ENCODE measurements at regions of chr2 and their contacts with region 1.

Region 1: DNA sequence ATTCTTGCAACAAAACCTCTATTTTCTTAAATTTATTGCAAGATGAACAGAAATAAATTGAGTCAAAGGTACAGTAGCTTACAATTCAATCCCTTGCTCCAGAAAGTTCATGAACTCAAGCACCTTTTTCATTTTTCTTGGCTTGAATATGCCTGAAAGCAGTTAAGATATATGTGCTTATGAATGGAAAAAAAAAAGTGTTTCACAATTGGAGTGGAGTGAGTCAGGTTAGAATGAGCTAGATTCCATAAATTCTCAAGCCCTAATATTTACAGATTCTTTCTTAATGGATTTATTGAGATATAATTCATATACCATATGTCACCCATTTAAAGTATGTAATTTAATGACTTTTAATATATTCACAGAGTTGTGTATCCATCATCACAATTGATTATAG is 39.6 kb upstream of the NEMP2 start:
- DNase-seq: no peak
- ATAC-seq: no peak
- H3K4me3 ChIP-seq: no peak overlapping the region
- H3K4me3 Mint-ChIP-seq: peak overlapping the region in 1 of 3 donors; percentile 61
- H3K27ac ChIP-seq: no peak overlapping the region
- H3K27ac Mint-ChIP-seq: no peak overlapping the region
- H3K4me1 ChIP-seq: peaks cover 14 to 30% of the 10 kb centered on the region in 2 experiments
- H3K4me1 Mint-ChIP-seq: peaks cover 26 to 48% (median 32%) of the 10 kb centered on the region in 3 donors
- H3K27me3 ChIP-seq: no peaks in the 10 kb centered on the region
- H3K27me3 Mint-ChIP-seq: no peaks in the 10 kb centered on the region

Region 2: DNA sequence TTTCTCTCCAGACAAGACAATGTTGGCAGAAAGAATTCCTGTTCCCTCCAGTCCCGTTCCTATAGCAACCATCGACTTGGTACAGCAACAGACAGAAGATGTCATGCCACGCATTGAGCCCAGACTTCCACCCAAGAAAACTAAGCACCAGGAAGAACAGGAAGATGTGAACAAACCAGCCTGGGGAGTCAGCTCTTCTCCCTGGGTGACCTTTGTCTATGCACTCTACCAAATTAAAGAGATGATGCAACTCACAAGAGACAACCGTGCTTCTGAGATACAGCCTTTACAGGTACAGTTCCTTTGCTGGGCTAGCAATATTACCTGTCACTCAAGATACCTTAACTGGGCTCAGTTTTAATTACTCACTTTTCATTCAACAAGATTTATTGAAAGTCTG is 76.7 kb before region 1 on chr2:
- CTCF ChIA-PET with region 1: no interaction called
- POLR2A ChIA-PET with region 1: interaction called in 1 of 2 experiments, 14 read pairs
- DNase-seq: no peak
- ATAC-seq: no peak
- H3K4me3 ChIP-seq: no peak overlapping the region
- H3K4me3 Mint-ChIP-seq: no peak overlapping the region
- H3K27ac ChIP-seq: no peak overlapping the region
- H3K27ac Mint-ChIP-seq: peak overlapping the region in 1 of 2 donors; percentile 54
- H3K4me1 ChIP-seq: no peaks in the 10 kb centered on the region
- H3K4me1 Mint-ChIP-seq: peaks cover 34 to 41% (median 36%) of the 10 kb centered on the region in 3 donors
- H3K27me3 ChIP-seq: no peaks in the 10 kb centered on the region
- H3K27me3 Mint-ChIP-seq: no peaks in the 10 kb centered on the region